H1 (cell line): ENCODE measurements at regions of chr3 and their contacts with region 1.

Region 1: GRCh38 chr3:13461169-13462158 is 18.6 kb upstream of the HDAC11 start:
- DNase-seq: peak; percentile 90 to 97
- H3K4me3 ChIP-seq: no peak overlapping the region
- H3K27ac ChIP-seq: no peak overlapping the region
- H3K4me1 ChIP-seq: peaks cover 0 to 2% (median 0%) of the 10 kb centered on the region in 4 experiments; a peak in 2 of 7 replicates
- H3K27me3 ChIP-seq: peaks cover 3 to 10% (median 9%) of the 10 kb centered on the region in 4 experiments; a peak in 6 of 7 replicates
- CTCF ChIP-seq: peak; percentile 97 to 100 (median 99)
- EP300 ChIP-seq: 0 out of 3 replicates have a peak, but pooled peaks of 1 of the 2 experiments have one; percentile 20
- POLR2A ChIP-seq: no peak
- RAD21 ChIP-seq: peak; percentile 86 to 92

Region 2: DNA sequence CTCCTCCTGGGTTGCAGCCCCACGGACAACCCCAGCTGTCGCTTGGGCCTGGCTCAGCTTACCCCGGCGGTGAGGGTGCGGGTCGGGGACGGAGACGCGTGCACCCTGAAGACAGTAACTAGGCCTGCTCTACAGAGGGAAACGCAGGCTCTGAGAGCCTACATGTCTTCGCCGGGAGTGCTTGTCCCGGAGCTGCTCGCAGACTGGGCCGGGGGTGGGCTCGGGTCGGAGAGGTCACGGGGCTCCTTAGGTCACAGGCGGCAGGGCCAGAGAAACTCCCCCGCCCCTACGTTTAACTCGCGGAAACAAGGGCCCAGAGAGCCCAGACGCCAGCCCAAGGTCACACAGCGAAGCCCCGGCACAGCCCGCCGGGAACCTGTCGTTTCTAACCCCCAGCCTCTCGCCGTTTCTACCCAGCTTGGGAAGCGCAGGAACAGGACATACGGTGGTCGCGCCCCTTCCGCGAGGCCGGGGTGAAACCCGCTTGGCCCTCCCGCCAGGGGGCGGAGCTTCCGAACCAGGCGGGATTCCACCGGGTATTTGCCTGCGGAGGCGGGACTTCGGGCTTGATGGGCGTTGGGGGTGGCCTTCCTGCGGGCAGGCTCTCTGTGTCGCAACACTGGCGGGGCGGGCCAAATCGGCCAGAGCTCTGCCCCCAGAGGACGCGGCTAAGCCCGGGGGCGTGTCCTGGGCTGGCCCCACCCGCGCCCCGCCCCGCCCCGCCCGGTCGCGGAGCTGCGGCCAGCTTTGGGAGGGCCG is 18.3 kb after region 1 on chr3 and contains the start of gene HDAC11:
- CTCF ChIA-PET with region 1: interaction called, 39 read pairs
- POLR2A ChIA-PET with region 1: interaction called, 6 read pairs
- DNase-seq: peak; percentile 98 to 99
- H3K4me3 ChIP-seq: peak within 1 kb of the TSS; percentile 54 to 80 (median 72)
- H3K27ac ChIP-seq: peak within 1 kb of the TSS; percentile 58
- H3K4me1 ChIP-seq: peaks cover 3 to 20% (median 8%) of the 10 kb centered on the region in 4 experiments
- H3K27me3 ChIP-seq: peaks cover 0 to 10% (median 5%) of the 10 kb centered on the region in 4 experiments; a peak in 5 of 7 replicates
- CTCF ChIP-seq: peak in 1 of 3 experiments; percentile 17; a peak in 1 of 4 replicates
- EP300 ChIP-seq: no peak; a peak in 1 of 3 replicates
- POLR2A ChIP-seq: peak in 1 of 2 experiments; percentile 70; a peak in 2 of 3 replicates
- RAD21 ChIP-seq: no peak
- total RNA-seq, gene HDAC11: 7.4 and 7.5 TPM in 2 replicates